ENCODE measurements at regions of chr3 and their contacts with region 1.

Region 1: GRCh38 chr3:139588450-139588849 is 48.9 kb upstream of the RBP1 start:
- DNase-seq: peak; percentile 6
- ATAC-seq: peak; percentile 78
- H3K4me3 ChIP-seq: no peak overlapping the region
- H3K27ac ChIP-seq: no peak overlapping the region
- H3K4me1 ChIP-seq: no peaks in the 10 kb centered on the region
- H3K27me3 ChIP-seq: no peaks in the 10 kb centered on the region
- CTCF ChIP-seq: peak; percentile 20 to 35 (median 26); a peak in 2 of 6 replicates
- POLR2A ChIP-seq: no peak
- RAD21 ChIP-seq: peak; percentile 57

Region 2: DNA sequence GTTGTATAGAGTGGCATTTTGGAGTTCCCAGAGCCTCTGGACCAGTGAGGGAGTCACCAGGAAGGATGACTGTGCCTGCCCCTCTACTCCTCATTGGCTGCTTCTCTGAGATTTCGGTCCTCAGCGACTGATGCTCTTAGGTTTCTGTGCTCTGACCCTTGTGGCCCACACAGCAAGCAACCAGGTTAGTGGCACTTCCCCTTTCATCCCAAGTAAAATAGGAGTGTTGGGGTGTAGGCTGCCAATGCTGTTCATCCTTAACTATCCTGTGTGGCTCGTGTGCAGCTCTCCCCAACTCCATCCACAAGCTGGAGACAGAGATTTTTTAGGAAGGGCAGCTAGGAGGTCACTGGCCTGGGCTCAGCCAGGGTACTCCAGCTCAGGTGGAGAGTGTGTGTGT is 603.6 kb before region 1 on chr3:
- CTCF ChIA-PET with region 1: no interaction called
- POLR2A ChIA-PET with region 1: no interaction called
- RAD21 ChIA-PET with region 1: no interaction called
- intact Hi-C with region 1: no loop called
- DNase-seq: no peak
- ATAC-seq: no peak
- H3K4me3 ChIP-seq: no peak overlapping the region
- H3K27ac ChIP-seq: no peak overlapping the region
- H3K4me1 ChIP-seq: peaks cover 0 to 2% of the 10 kb centered on the region in 2 experiments; a peak in 1 of 4 replicates
- H3K27me3 ChIP-seq: no peaks in the 10 kb centered on the region
- CTCF ChIP-seq: no peak
- POLR2A ChIP-seq: no peak
- RAD21 ChIP-seq: no peak

Region 3: DNA sequence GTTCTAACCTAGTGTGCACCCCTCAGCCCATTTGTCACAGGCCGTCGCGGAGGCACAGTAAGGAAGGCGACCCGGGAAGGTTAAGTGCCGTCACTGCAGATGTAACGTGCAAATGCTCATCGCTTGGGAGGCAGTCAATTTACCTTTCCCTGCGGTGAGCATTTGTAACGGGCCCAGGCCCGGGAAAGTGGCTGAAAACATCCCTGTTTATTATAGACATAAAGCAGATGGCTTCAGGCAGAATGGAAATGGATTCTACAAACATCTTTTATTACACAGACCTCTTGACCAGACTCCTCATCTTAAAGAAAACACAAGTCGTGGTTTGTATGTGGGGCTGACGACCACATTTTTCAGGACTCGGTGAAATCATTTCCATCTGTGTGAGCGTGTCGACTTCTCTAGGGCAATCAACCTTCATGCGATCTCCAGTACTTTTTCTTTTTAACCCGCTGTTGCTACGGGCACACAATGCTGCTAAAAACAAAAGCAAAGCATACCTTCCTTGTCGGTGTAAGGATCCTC is 45.7 kb after region 1 on chr3:
- CTCF ChIA-PET with region 1: no interaction called
- POLR2A ChIA-PET with region 1: no interaction called
- RAD21 ChIA-PET with region 1: no interaction called
- intact Hi-C with region 1: no loop called
- DNase-seq: no peak
- ATAC-seq: no peak
- H3K4me3 ChIP-seq: no peak overlapping the region
- H3K27ac ChIP-seq: no peak overlapping the region
- H3K4me1 ChIP-seq: no peaks in the 10 kb centered on the region
- H3K27me3 ChIP-seq: no peaks in the 10 kb centered on the region
- CTCF ChIP-seq: no peak
- POLR2A ChIP-seq: no peak
- RAD21 ChIP-seq: no peak

Region 4: DNA sequence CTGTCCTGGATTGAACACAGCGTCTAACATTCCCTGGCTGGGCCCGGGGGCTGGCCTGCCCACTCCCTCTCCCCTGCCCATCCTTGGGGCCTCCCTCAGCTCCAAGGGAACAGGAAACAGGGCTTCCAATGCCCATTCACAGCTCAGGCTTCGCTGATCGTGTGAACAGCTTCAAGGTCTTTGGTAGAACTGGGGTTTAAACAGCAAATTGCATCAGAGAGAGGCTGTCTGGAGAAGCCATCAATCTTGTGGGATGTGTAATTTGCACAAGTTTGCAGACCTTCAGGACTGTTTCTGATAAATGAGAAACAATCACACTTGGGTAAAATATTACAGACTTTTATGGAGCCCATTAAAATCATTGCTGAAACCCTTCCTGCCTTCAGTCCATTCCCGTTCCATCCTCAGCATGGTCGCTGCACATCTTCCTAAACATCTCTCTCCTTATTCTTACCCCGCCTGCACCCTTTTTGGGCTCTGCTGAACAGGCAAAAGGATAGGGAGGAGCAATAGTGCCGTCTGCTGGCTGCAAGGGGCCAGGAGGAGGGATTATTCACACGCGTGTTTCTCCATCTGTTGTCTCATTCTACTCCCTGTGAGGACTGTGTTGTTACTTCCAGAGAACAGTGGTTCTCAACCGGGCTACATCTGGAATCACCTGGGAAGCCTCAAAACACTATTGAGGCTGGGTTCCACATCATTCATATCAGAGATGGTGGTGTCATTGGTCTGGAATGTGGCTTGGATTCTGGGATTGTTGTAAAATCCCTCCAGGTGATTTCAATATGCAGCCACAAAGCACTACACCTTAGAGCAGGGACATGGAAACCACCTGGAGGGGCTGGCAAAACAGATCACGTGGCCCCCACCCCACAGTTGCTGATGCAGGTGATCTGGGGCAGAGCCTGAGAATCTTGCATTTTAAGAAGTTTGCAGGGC is 462.8 kb after region 1 on chr3:
- CTCF ChIA-PET with region 1: interaction called, 3 read pairs
- POLR2A ChIA-PET with region 1: no interaction called
- RAD21 ChIA-PET with region 1: no interaction called
- intact Hi-C with region 1: loop called (anchors 10 kb)
- DNase-seq: peak; percentile 21
- ATAC-seq: peak; percentile 83; the same call in 1 of the 2 replicates
- H3K4me3 ChIP-seq: no peak overlapping the region
- H3K27ac ChIP-seq: no peak overlapping the region
- H3K4me1 ChIP-seq: no peaks in the 10 kb centered on the region
- H3K27me3 ChIP-seq: peaks cover 41% of the 10 kb centered on the region
- CTCF ChIP-seq: peak; percentile 50 to 65 (median 62); a peak in 5 of 6 replicates
- POLR2A ChIP-seq: no peak
- RAD21 ChIP-seq: peak; percentile 70

Measured in HCT116 (cell line).